H1 (cell line): ENCODE measurements at regions of chr17 and their contacts with region 1.

Region 1: GRCh38 chr17:49486012-49486641 is 9.0 kb upstream of the NGFR start:
- DNase-seq: peak; percentile 75 to 82
- H3K4me3 ChIP-seq: peak overlapping the region; percentile 1 to 46 (median 22); a peak in 5 of 8 replicates
- H3K27ac ChIP-seq: peak overlapping the region; percentile 43; the same call in 1 of the 2 replicates
- H3K4me1 ChIP-seq: peaks cover 7 to 30% (median 22%) of the 10 kb centered on the region in 4 experiments
- H3K27me3 ChIP-seq: no peaks in the 10 kb centered on the region; a peak in 2 of 7 replicates
- CTCF ChIP-seq: no peak
- EP300 ChIP-seq: no peak
- POLR2A ChIP-seq: peak in 1 of 2 experiments; percentile 80; a peak in 2 of 3 replicates
- RAD21 ChIP-seq: no peak

Region 2: DNA sequence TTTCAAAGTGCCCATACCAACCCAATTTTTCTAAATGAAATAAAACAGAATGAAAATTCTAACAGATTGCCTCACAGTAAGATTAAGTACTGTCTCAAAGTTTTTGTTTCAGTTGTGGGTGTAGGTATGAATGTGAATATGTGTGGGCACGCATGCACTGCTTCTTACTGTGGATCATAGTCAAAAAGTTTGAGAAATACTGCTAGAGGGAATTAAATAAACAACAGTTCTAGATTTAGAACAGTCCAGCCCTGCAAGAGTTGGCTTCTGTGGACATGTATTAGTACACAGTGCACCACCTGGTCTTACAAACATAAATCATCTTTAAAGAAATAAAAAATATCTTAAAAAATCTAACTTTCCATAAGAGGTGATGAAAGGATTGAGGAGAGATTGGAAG is 132.5 kb before region 1 on chr17:
- CTCF ChIA-PET with region 1: no interaction called
- POLR2A ChIA-PET with region 1: no interaction called
- DNase-seq: no peak
- H3K4me3 ChIP-seq: no peak overlapping the region
- H3K27ac ChIP-seq: no peak overlapping the region
- H3K4me1 ChIP-seq: no peaks in the 10 kb centered on the region
- H3K27me3 ChIP-seq: no peaks in the 10 kb centered on the region
- CTCF ChIP-seq: no peak
- EP300 ChIP-seq: no peak
- POLR2A ChIP-seq: no peak
- RAD21 ChIP-seq: no peak

Region 3: DNA sequence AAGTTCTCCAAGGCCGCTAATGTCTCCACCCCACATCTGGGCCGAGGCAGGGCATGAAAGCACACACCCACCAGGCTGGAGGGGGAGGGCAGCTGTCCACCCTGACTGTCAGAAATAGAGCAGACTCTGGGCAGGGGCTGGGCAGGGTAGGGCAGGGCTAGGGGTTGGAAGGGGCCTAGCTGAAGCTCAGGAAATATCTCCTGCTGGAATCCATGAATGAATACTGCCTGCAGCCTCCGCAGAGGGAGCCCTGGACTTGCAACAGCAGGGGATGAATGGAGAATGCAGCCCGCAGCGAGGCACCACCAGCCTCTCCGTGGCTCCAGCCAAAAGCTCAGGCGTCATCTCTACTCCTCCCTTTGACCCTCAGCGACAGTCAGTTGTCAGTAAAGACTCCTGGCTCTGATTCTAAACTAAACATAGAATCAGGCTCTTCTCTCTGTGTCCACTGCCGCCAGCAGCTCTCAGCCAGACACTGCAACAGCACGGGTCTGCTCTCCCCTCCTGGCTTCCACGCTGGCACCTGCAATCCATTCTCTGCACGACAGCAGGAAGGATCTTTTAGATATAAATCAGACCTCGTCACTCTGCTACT is 14.9 kb before region 1 on chr17:
- CTCF ChIA-PET with region 1: interaction called, 14 read pairs
- POLR2A ChIA-PET with region 1: interaction called, 13 read pairs
- DNase-seq: no peak
- H3K4me3 ChIP-seq: peak overlapping the region in 1 of 4 experiments; percentile 73; a peak in 3 of 8 replicates
- H3K27ac ChIP-seq: no peak overlapping the region
- H3K4me1 ChIP-seq: peaks cover 7 to 16% (median 12%) of the 10 kb centered on the region in 4 experiments
- H3K27me3 ChIP-seq: peaks cover 3 to 35% (median 34%) of the 10 kb centered on the region in 4 experiments
- CTCF ChIP-seq: peak in 1 of 3 experiments; percentile 2; a peak in 1 of 4 replicates
- EP300 ChIP-seq: no peak
- POLR2A ChIP-seq: no peak
- RAD21 ChIP-seq: no peak; a peak in 1 of 4 replicates

Region 4: GRCh38 chr17:49501504-49501903 is 15.4 kb after region 1 on chr17:
- CTCF ChIA-PET with region 1: interaction called, 30 read pairs
- POLR2A ChIA-PET with region 1: interaction called, 24 read pairs
- DNase-seq: no peak
- H3K4me3 ChIP-seq: no peak overlapping the region
- H3K27ac ChIP-seq: no peak overlapping the region
- H3K4me1 ChIP-seq: peaks cover 0 to 13% (median 8%) of the 10 kb centered on the region in 4 experiments; a peak in 6 of 7 replicates
- H3K27me3 ChIP-seq: peaks cover 5 to 26% (median 22%) of the 10 kb centered on the region in 4 experiments
- CTCF ChIP-seq: no peak
- EP300 ChIP-seq: no peak
- POLR2A ChIP-seq: no peak
- RAD21 ChIP-seq: no peak

Region 5: DNA sequence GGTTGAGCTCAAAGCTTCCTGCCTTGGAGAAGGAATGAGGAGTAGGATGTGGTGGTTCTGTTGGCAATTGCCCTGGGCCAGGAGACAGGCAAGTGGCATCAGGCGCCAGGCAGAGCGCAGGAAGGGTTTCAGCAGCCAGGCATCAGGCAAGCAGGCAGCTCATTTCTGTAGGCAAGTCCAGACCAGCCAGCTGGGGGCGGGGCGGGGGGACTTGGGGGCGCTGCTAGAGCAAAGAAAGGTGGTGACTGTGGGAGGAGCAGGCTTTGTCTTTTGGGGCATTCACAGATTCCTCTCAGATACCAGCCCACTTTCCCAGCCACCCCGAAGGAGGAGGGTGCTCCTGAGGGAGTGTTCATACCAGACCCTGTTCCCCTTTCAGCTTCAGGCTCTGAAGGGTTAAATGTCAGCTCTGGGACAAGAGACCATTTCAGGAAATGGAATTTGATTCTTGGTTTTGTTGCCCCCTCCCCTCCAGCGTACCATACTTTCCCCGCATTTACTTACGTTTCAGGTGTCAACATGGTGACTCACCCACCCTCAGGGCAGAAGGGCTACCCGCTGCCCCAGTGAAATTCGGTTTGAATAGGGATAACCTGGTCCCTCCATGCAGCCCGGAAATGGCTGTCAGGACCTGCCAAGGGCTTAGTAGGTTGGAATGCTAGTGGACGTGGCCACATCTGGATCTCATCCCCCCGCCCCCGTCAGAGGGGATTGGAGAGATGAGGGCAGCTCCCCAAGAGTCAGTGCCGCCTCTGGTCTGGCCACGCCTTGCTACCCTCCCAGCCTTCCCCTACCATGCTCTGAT is 22.1 kb after region 1 on chr17:
- CTCF ChIA-PET with region 1: interaction called, 15 read pairs
- POLR2A ChIA-PET with region 1: interaction called, 8 read pairs
- DNase-seq: peak; percentile 83 to 97
- H3K4me3 ChIP-seq: peak overlapping the region; percentile 22 to 51 (median 34); a peak in 5 of 8 replicates
- H3K27ac ChIP-seq: peak overlapping the region; percentile 58; the same call in 1 of the 2 replicates
- H3K4me1 ChIP-seq: peaks cover 6 to 40% (median 22%) of the 10 kb centered on the region in 4 experiments
- H3K27me3 ChIP-seq: peaks cover 0 to 2% (median 0%) of the 10 kb centered on the region in 4 experiments; a peak in 1 of 7 replicates
- CTCF ChIP-seq: no peak
- EP300 ChIP-seq: no peak
- POLR2A ChIP-seq: peak in 1 of 2 experiments; percentile 48; a peak in 1 of 3 replicates
- RAD21 ChIP-seq: no peak

Region 6: GRCh38 chr17:49515196-49515770 is 29.2 kb after region 1 on chr17:
- CTCF ChIA-PET with region 1: interaction called, 15 read pairs
- POLR2A ChIA-PET with region 1: interaction called, 3 read pairs
- DNase-seq: peak in 1 of 2 experiments; percentile 70
- H3K4me3 ChIP-seq: no peak overlapping the region
- H3K27ac ChIP-seq: no peak overlapping the region
- H3K4me1 ChIP-seq: peaks cover 16 to 41% (median 22%) of the 10 kb centered on the region in 4 experiments
- H3K27me3 ChIP-seq: no peaks in the 10 kb centered on the region
- CTCF ChIP-seq: no peak; a peak in 1 of 4 replicates
- EP300 ChIP-seq: no peak
- POLR2A ChIP-seq: no peak; a peak in 1 of 3 replicates
- RAD21 ChIP-seq: peak; percentile 7 to 33; a peak in 3 of 4 replicates

Region 7: DNA sequence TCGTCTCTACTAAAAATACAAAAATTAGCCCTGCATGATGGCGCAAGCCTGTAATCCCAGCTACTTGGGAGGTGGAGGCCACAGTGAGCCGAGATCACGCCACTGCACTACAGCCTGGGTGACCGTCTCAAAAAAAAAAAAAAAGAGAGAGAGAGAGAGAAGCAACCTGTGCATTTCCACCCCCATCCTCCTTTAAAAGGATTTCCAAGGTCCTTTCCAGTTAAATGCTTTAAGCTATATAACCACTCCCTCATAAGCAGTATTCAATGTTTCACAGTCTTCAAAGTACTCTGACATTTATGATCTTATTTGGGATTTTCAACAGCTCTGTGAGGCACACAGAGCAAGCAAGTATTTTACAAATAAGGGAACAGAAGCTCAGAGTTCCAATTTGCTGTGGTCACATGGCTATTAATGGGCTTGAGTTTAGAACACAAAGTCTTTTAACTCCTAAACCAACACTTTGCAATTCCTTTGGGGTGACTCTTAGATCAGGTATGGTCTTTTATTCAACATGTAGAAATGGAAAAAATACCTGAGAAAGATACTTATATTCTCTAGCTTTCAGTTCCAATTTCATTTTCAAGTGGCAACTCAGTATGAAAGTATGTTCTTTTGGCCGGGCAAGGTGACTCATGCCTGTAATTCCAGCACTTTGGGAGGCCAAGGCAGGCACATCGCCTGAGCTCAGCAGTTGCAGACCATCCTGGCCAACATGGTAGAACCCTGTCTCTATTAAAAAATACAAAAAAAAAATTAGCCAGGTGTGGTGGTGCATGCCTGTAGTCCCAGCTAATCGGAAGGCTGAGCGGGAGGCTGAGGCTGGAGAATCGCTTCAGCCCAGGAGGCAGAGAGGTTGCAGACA is 160.5 kb after region 1 on chr17:
- CTCF ChIA-PET with region 1: no interaction called
- POLR2A ChIA-PET with region 1: no interaction called
- DNase-seq: no peak
- H3K4me3 ChIP-seq: no peak overlapping the region
- H3K27ac ChIP-seq: no peak overlapping the region
- H3K4me1 ChIP-seq: peaks cover 0 to 2% (median under 1%) of the 10 kb centered on the region in 4 experiments; a peak in 4 of 7 replicates
- H3K27me3 ChIP-seq: no peaks in the 10 kb centered on the region
- CTCF ChIP-seq: no peak
- EP300 ChIP-seq: no peak
- POLR2A ChIP-seq: no peak
- RAD21 ChIP-seq: no peak